Esophagus muscularis mucosa (tissue), 4 donors: ENCODE measurements at regions of chr1 and their contacts with region 1.

Region 1: DNA sequence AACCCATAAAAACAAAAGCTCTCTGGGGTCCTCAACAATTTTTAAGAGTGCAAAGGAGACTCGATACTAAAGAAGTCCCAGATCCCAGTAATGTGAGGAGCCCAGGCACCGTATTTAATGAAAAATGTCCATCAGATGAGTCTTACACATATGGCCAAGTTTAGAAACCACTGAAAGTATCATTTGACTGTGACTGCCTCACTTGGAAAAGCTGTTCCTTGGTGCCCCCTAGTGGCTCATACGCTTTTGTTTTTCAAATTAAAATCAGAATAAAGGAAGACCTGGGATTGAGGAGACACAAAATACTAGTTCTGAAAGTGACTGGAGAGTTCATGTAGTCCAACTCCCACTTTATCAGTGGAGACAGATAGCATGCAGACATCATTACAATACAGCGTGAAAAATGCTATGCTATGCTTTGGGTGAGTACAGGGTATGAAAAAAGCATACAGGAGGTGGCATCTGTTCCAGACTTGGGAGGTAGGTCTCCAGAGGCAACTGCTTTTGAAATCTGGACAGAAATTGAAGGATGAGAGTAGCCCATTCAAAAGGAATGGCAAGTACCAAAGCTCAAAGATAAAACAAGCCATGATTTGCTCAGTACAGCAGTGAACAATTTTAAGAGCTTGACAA is 33.8 kb downstream of the GDAP2 start:
- DNase-seq: no peak
- H3K4me3 ChIP-seq: no peak overlapping the region
- H3K27ac ChIP-seq: no peak overlapping the region
- H3K4me1 ChIP-seq: no peaks in the 10 kb centered on the region
- H3K27me3 ChIP-seq: no peaks in the 10 kb centered on the region
- CTCF ChIP-seq: peak; percentile 64 to 73 (median 66)
- EP300 ChIP-seq: no peak
- POLR2A ChIP-seq: no peak

Region 2: GRCh38 chr1:117512743-117513321 is 382.8 kb before region 1 on chr1:
- intact Hi-C with region 1: loop called (anchors 10 kb)
- DNase-seq: no peak
- H3K4me3 ChIP-seq: no peak overlapping the region
- H3K27ac ChIP-seq: no peak overlapping the region
- H3K4me1 ChIP-seq: no peaks in the 10 kb centered on the region
- H3K27me3 ChIP-seq: no peaks in the 10 kb centered on the region
- CTCF ChIP-seq: peak; percentile 43 to 56 (median 54)
- EP300 ChIP-seq: no peak
- POLR2A ChIP-seq: no peak

Region 3: DNA sequence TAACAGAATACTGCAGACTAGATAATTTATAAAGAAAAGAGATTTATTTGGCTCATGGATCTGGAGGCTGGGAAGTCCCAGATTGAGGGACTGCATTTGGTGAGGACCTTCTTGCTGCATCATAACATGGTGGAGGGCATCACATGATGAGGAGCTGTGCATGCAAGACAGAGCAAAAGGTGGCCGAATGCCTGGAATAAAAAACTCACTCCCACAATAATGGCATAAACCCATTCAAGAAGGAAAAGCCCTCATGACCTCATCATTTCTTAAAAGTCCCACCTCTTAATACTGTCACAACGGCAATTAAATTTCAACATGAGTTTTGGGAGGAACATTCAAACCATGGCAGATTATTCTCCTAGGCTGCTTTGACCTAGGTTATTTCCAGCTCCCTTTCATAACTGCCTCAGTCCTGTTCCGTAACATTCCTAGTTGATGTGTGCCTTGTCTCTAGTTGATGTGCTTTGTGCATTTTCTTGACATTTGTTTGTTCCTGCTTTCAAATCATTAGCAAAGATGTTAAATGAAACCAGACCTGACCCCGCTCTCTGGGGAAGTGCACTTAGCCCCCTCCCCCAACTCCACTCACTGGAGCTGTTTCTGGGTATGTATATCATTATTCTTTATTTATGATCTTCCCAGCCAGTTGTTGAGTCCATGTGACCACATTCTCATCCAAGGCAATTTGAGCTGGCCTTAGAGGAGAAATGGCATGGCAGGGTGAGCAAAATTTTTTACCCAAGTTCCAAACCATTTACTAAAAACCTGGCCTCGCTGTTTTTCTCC is 114.7 kb before region 1 on chr1:
- intact Hi-C with region 1: no loop called
- DNase-seq: no peak
- H3K4me3 ChIP-seq: no peak overlapping the region
- H3K27ac ChIP-seq: peak overlapping the region in 1 of 4 donors; percentile 26
- H3K4me1 ChIP-seq: peaks cover 0 to 3% (median 0%) of the 10 kb centered on the region in 4 donors
- H3K27me3 ChIP-seq: no peaks in the 10 kb centered on the region
- CTCF ChIP-seq: no peak
- EP300 ChIP-seq: no peak
- POLR2A ChIP-seq: no peak

Region 4: DNA sequence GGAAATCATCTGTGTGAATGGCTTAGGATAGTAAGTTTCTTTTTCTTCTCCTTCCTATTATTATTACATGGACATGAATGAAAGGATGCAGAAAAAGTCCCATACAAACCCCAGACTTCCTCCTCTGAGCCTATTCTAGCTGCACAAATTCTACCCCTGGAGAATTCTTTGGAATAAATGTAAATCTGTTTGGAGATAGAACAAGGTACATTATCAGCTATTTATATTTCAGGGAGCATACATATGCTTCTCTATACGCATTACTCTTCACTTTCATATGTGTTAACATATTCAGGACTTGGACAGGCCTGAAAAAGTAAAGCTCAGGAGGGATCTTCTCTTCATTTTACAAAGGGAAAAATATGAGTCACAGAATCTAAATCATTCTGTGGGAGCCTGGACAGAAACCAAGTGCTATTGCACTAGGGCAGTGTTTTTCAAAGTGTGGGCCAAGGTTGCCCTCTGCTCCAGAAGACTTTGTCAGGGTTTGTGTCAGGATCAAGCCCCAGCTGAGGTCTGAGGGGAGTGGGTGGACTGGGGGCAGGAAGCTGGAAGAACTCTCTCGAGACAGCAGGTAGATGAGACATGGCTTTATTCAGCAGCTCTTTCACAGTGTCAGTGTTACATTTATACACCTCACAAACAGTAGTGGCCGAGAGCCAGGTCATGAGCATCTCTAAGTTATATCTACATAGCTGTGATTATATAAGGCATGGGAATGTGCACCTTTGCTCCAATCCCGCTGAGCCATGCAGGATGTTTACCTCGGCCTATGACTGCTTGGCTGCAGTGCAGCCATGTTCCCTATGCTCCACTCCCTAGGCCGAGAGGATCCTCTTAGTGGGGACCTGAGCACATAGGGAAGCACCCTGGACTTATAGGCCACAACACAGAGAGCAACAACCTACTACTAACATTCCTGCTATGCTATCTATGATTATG is 80.5 kb before region 1 on chr1:
- intact Hi-C with region 1: loop called (anchors 5 kb)
- DNase-seq: no peak
- H3K4me3 ChIP-seq: no peak overlapping the region
- H3K27ac ChIP-seq: peak overlapping the region; percentile 50 to 76 (median 66)
- H3K4me1 ChIP-seq: peaks cover 0 to 43% (median 36%) of the 10 kb centered on the region in 4 donors
- H3K27me3 ChIP-seq: no peaks in the 10 kb centered on the region
- CTCF ChIP-seq: no peak
- EP300 ChIP-seq: no peak
- POLR2A ChIP-seq: no peak

Region 5: DNA sequence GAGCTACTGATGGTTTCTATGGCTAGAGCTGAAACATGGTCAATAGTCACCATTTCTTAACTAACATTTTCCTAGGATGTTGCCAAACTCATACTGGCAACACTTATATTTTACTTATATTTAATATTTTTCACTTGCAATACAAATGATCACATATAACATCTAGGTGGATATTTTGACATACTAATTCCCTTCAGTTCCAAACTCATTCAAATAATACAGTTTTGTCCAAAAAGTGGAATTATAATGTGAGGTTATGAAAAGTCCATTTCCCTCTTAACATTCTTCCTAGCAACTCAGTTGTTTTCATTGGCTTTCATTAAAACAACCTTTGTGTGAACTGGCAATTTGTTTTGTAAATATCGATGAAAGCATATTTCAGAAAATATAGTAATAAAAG is 273.4 kb after region 1 on chr1:
- intact Hi-C with region 1: no loop called
- DNase-seq: no peak
- H3K4me3 ChIP-seq: no peak overlapping the region
- H3K27ac ChIP-seq: no peak overlapping the region
- H3K4me1 ChIP-seq: no peaks in the 10 kb centered on the region
- H3K27me3 ChIP-seq: no peaks in the 10 kb centered on the region
- CTCF ChIP-seq: no peak
- EP300 ChIP-seq: no peak
- POLR2A ChIP-seq: no peak